Prostate gland (tissue), 2 donors: ENCODE measurements at regions of chr1 and their contacts with region 1.

Region 1: GRCh38 chr1:15949453-15950245 is 26.3 kb downstream of the ZBTB17 start:
- DNase-seq: peak; percentile 72
- H3K4me3 ChIP-seq: no peak overlapping the region
- H3K27ac ChIP-seq: peak overlapping the region; percentile 71 to 76
- H3K4me1 ChIP-seq: peaks cover 9% of the 10 kb centered on the region
- H3K27me3 ChIP-seq: no peaks in the 10 kb centered on the region
- CTCF ChIP-seq: no peak
- POLR2A ChIP-seq: no peak

Region 2: DNA sequence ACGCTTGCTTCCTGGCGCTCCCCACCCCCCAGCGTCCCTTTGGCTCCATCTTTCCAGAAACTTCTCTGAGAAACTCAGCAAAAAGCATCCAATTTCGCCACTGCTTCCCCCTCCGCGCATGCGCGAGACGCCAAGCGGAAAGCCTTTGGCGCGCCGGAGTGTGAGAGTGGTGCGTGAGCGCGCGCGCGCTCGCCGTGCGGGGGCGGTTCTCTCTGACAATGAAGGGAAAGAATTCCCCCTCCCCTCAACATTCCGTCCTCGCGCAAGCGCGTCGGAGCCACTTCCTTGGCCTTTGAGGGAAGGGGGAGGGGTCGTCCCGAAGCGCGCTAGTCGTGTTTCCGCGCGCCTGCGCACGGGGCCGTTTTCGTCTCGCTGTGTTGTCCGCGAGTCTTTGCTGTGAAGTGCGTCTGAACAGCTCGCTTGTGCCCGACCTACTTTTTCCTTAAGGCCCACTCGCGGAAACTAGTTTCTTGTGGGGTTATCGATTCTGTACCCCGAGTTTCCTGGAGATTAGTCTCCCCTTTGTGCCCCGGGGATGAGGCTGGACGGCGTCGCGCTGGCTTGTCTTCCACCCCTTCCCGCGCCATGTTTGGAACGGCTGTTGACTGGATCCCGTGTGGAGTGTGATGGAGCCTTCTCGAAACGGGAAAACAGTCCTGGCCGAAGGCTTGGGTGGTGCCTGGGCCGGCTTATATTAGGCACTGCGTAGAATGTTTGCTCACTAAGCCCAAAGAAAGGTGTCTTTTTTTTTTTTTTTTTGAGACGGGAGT is 113.7 kb before region 1 on chr1:
- intact Hi-C with region 1: loop called (anchors 5 kb)
- DNase-seq: peak; percentile 99
- H3K4me3 ChIP-seq: peak overlapping the region; percentile 53 to 79
- H3K27ac ChIP-seq: peak overlapping the region; percentile 99 to 100
- H3K4me1 ChIP-seq: no peaks in the 10 kb centered on the region
- H3K27me3 ChIP-seq: no peaks in the 10 kb centered on the region
- CTCF ChIP-seq: peak in 1 of 4 experiments; percentile 13
- POLR2A ChIP-seq: peak; percentile 94

Region 3: GRCh38 chr1:15847100-15847892 is 102.4 kb before region 1 on chr1 and contains the start of gene SPEN:
- intact Hi-C with region 1: loop called (anchors 5 kb)
- DNase-seq: peak; percentile 96
- H3K4me3 ChIP-seq: peak within 1 kb of the TSS; percentile 87 to 93
- H3K27ac ChIP-seq: peak within 1 kb of the TSS; percentile 96 to 98
- H3K4me1 ChIP-seq: no peaks in the 10 kb centered on the region
- H3K27me3 ChIP-seq: no peaks in the 10 kb centered on the region
- CTCF ChIP-seq: peak in 2 of 4 experiments; percentile 41 to 46
- POLR2A ChIP-seq: peak; percentile 81
- total RNA-seq, gene SPEN: 31.9 to 48.3 TPM

Region 4: GRCh38 chr1:15885701-15886610 is 63.7 kb before region 1 on chr1:
- intact Hi-C with region 1: loop called (anchors 5 kb)
- DNase-seq: peak; percentile 96
- H3K4me3 ChIP-seq: peak overlapping the region; percentile 15 to 27
- H3K27ac ChIP-seq: peak overlapping the region; percentile 86 to 91
- H3K4me1 ChIP-seq: no peaks in the 10 kb centered on the region
- H3K27me3 ChIP-seq: no peaks in the 10 kb centered on the region
- CTCF ChIP-seq: peak in 1 of 4 experiments; percentile 15
- POLR2A ChIP-seq: peak; percentile 64

Region 5: DNA sequence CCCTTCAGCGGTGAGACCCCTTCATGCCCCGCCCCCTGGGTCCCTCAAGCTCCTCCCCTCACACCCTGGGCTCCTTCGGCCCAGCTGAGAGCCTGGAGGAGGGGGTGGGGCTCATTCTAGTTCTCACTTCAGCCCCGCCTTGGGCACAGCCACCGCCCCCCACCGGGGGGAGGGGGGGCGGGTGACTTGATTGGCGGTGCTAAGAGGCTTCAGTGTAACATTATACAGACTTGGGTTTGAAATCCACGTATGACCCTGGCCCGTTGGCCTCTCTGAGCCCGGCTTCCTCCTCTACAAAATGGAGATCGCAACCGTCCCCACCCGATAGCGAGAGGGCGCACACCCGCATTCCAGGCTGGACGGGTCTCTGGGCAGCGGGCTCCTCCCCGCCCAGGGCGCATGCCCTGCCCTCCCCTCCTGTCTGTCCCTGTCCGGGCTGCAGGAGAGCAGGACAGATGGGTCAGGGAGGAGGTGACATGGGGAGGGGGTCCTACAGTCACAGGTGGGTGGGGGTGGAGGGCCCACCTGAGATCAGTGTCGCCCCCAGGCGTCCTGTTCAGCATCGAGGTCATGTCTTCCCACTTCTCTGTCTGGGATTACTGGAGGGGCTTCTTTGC is 99.0 kb after region 1 on chr1:
- intact Hi-C with region 1: no loop called
- DNase-seq: peak; percentile 41
- H3K4me3 ChIP-seq: peak overlapping the region; percentile 21 to 32
- H3K27ac ChIP-seq: no peak overlapping the region
- H3K4me1 ChIP-seq: no peaks in the 10 kb centered on the region
- H3K27me3 ChIP-seq: no peaks in the 10 kb centered on the region
- CTCF ChIP-seq: no peak
- POLR2A ChIP-seq: no peak